Posterior vena cava (tissue), 2 donors: ENCODE measurements at regions of chr14 and their contacts with region 1.

Region 1: GRCh38 chr14:85041634-85042033 is 488.3 kb upstream of the FLRT2 start:
- DNase-seq: no peak

Region 2: DNA sequence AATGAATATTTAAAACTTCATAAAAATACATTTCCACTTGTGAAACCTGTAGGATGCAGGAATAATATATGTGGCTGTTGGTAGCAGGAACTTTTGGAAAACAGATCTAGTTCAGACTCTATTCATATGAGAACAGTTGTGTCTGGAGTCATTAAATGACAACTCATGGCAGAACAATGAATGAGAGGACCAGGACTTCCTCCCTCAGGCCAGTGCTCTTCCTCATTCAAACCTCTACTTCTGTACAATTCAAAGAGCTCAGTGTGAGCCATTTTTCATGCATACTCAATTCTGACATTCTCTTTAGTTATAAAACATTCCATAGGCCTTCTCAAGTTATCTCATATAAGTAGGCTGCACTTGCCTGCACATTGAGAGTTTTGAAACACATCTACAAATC is 1038.3 kb before region 1 on chr14:
- intact Hi-C with region 1: no loop called
- DNase-seq: no peak

Region 3: DNA sequence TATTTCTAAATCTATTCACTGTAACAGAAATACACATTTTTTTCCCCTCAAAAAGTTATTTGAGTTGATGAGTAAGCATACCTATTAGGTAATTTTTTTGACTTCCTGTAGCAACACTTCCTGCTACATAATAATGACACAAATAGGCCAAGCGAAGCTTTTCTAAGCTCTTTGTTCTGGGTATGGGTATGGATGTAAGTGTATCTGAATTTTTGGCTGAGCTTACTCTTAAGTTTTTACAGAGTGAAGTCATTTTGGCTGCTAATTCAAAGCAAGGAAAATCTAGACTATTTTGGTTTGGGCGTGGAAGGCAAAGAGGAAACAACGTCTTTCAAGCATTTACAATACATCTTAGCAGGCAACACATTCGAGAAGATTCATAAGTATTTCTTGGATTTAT is 717.7 kb before region 1 on chr14:
- intact Hi-C with region 1: no loop called
- DNase-seq: no peak

Region 4: DNA sequence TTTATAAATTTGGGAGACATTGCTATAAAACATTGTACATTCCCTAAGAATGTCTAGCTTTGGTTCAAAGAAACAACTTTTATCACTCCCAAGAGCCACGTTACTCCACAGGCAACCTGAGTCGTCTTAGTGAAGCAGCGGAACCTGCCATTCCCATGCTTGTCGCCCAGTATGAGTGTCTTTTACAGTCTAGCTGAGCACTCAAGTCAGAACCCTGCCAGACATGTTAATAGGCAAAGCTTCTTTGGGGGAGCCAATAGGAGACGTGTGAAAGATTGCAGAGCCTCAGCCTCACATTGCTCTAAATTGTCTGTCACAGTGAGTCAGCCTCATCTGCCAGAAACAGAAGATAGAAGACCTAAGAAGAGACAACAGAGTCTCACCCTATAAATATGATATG is 53.3 kb before region 1 on chr14:
- intact Hi-C with region 1: loop called in 1 of 2 experiments (anchors 2 kb)
- DNase-seq: no peak